Upper lobe of right lung (tissue), 1 donor: ENCODE measurements at regions of chr12 and their contacts with region 1.

Region 1: GRCh38 chr12:546921-547845 is 87.4 kb downstream of the B4GALNT3 start:
- DNase-seq: peak; percentile 85
- ATAC-seq: peak; percentile 93
- H3K4me3 ChIP-seq: no peak overlapping the region
- H3K27ac ChIP-seq: no peak overlapping the region
- H3K4me1 ChIP-seq: no peaks in the 10 kb centered on the region
- H3K27me3 ChIP-seq: no peaks in the 10 kb centered on the region
- CTCF ChIP-seq: peak; percentile 96

Region 2: DNA sequence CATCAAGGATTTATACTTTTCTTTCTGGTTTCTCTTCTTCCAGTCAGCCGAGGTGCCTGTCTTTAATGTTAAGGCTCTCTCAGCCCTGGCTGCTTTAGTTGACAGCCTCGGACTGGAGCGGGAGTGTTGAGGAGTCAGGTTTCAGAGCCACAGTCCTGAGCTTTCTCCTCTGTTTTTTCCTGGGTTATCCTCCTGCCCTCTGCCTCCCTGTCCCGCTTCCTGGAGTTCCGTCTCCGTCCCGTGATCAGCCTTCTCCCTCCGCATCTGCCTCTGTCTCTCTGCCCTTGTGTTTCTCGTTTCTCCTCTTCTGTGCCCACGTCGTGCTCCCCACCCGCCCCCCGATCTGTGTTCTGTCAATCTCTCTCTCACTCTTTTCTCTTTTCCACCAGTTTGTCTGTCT is 447.6 kb before region 1 on chr12:
- intact Hi-C with region 1: no loop called
- DNase-seq: peak; percentile 34
- ATAC-seq: no peak
- H3K4me3 ChIP-seq: no peak overlapping the region
- H3K27ac ChIP-seq: no peak overlapping the region
- H3K4me1 ChIP-seq: no peaks in the 10 kb centered on the region
- H3K27me3 ChIP-seq: peaks cover 31% of the 10 kb centered on the region
- CTCF ChIP-seq: no peak

Region 3: DNA sequence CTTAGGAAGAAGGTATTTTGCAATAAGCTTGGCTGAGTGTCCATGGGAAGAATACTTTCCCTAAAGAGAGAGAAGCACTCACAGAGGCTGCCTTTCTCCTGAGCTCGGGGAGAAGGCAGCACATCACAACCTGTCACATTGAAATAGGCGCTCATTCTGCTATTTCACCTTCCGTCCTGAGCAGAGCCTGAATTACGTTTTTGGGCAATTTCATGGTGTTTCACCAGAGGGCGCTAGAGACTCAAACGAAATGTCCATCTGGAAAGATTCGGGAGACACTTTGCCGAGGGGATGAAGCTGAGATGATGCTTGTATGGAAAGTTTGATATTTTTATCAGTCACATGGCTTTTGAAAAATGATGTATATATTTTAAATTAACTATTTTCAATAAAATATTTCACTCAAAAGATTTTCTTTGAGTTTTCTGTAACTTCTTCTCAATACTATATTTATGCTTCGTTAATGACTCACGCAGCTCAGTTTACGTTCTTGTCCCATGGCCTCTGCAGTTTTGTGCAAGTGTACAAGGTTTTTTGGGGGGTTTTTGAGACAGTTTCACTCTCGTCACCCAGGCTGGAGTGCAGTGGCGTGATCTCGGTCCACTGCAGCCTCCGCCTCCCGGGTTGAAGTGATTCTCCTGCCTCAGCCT is 104.8 kb before region 1 on chr12:
- intact Hi-C with region 1: no loop called
- DNase-seq: no peak
- ATAC-seq: peak; percentile 74
- H3K4me3 ChIP-seq: no peak overlapping the region
- H3K27ac ChIP-seq: no peak overlapping the region
- H3K4me1 ChIP-seq: no peaks in the 10 kb centered on the region
- H3K27me3 ChIP-seq: no peaks in the 10 kb centered on the region
- CTCF ChIP-seq: peak; percentile 76

Region 4: GRCh38 chr12:452667-453210 is 94.4 kb before region 1 on chr12:
- intact Hi-C with region 1: loop called (anchors 5 kb)
- DNase-seq: peak; percentile 69
- ATAC-seq: no peak
- H3K4me3 ChIP-seq: no peak overlapping the region
- H3K27ac ChIP-seq: no peak overlapping the region
- H3K4me1 ChIP-seq: no peaks in the 10 kb centered on the region
- H3K27me3 ChIP-seq: peaks cover 4% of the 10 kb centered on the region
- CTCF ChIP-seq: no peak

Region 5: DNA sequence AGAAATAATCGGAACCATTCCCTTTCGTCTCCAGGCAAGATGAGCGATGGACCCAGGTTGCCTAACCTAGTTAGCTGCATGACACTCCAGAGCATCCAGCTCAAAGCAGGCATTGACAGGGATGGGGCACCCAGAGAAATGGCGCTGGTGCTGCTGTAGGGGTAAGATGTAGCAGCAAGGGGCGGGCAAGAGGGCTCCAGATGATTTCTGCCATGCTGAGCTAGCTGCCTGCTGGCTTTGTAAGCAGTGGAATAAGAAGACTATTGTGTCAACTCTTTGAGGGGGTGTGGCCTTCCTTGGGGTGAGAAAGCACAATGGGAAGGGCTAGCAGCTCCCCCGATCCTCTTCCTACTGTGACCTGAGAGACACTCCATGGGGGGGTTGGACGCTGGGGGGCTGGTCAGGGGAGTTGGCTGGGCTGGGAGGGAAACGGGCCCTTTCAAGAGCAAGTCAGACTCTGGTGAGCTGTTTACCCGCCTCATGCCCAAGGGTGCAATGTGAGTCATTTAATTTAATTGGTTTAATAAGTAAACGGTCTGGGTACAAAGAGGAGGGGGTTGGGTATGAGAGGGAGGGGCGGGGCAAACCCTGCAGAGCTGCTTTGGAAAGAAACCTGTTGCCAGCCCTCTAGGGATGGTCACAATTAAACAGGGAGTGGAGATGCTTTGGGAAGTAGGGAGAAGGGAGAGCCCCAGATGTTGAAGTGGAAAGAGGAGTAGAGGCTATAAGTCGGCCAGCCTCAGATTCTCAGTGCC is 36.9 kb before region 1 on chr12:
- intact Hi-C with region 1: no loop called
- DNase-seq: peak; percentile 74
- ATAC-seq: peak; percentile 84
- H3K4me3 ChIP-seq: no peak overlapping the region
- H3K27ac ChIP-seq: peak overlapping the region; percentile 51
- H3K4me1 ChIP-seq: peaks cover 6% of the 10 kb centered on the region
- H3K27me3 ChIP-seq: no peaks in the 10 kb centered on the region
- CTCF ChIP-seq: no peak